ENCODE measurements at regions of chr7 and their contacts with region 1.

Region 1: GRCh38 chr7:100861616-100861985 is 5.6 kb upstream of the TRIP6 start:
- DNase-seq: no peak
- ATAC-seq: no peak
- H3K4me3 ChIP-seq: no peak overlapping the region
- H3K27ac ChIP-seq: no peak overlapping the region
- H3K4me1 ChIP-seq: peaks cover 3% of the 10 kb centered on the region
- H3K27me3 ChIP-seq: no peaks in the 10 kb centered on the region
- CTCF ChIP-seq: no peak

Region 2: GRCh38 chr7:100819551-100819950 is 42.0 kb before region 1 on chr7:
- CTCF ChIA-PET with region 1: interaction called, 11 read pairs
- POLR2A ChIA-PET with region 1: no interaction called
- in situ Hi-C with region 1: no loop called
- intact Hi-C with region 1: no loop called
- DNase-seq: no peak
- ATAC-seq: no peak
- H3K4me3 ChIP-seq: no peak overlapping the region
- H3K27ac ChIP-seq: no peak overlapping the region
- H3K4me1 ChIP-seq: peaks cover 7% of the 10 kb centered on the region
- H3K27me3 ChIP-seq: no peaks in the 10 kb centered on the region
- CTCF ChIP-seq: no peak

Region 3: GRCh38 chr7:101021703-101022102 is 160.1 kb after region 1 on chr7:
- CTCF ChIA-PET with region 1: no interaction called
- POLR2A ChIA-PET with region 1: no interaction called
- in situ Hi-C with region 1: no loop called
- intact Hi-C with region 1: no loop called
- DNase-seq: no peak
- ATAC-seq: no peak
- H3K4me3 ChIP-seq: no peak overlapping the region
- H3K27ac ChIP-seq: no peak overlapping the region
- H3K4me1 ChIP-seq: peaks cover 10% of the 10 kb centered on the region
- H3K27me3 ChIP-seq: no peaks in the 10 kb centered on the region
- CTCF ChIP-seq: no peak

Region 4: DNA sequence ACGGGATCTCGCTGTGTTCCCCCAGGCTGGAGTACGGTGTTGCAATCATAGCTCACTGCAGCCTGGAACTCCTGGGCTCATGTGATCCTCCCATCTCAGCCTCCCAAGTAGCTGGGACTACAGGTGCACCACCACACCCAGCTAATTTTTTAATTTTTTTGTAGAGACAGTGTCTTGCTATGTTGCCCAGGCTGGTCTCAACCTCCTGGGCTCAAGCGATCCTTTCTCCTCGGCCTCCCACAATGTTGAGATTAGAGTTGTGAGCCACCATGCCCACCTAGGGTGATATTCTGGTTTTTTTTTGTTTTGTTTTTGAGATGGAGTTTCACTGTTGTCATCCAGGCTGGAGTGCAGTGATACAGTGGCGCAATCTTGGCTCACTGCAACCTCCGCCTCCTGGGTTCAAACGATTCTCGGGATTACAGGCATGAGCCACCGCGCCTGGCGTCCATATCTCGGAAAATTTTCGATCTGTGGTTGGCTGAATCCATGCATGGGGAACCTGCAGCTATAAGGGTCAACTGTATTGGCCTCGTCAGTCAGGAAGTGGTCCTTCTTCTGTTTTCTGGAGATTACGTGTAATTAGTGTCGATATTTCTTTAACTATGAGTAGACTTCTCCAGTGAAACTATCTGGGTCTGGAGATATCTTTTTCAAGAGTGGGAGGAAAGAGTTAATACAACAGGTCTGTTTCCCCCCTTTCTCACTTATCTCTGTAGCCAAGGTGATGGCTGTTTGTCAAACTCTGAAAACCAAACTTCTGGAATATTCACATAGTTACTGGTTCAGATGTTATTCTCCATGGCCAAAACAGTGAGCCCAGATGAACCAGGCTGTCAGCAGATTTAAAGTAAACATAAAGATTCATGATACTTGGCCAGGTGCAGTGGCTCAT is 404.3 kb after region 1 on chr7:
- CTCF ChIA-PET with region 1: no interaction called
- POLR2A ChIA-PET with region 1: no interaction called
- in situ Hi-C with region 1: no loop called
- intact Hi-C with region 1: no loop called
- DNase-seq: no peak
- ATAC-seq: no peak
- H3K4me3 ChIP-seq: no peak overlapping the region
- H3K27ac ChIP-seq: no peak overlapping the region
- H3K4me1 ChIP-seq: no peaks in the 10 kb centered on the region
- H3K27me3 ChIP-seq: no peaks in the 10 kb centered on the region
- CTCF ChIP-seq: no peak